B cell (primary cell): ENCODE measurements at regions of chr17 and their contacts with region 1.

Region 1: GRCh38 chr17:31216053-31216751 is 80.8 kb downstream of the OMG start:
- DNase-seq: peak; percentile 63
- ATAC-seq: no peak
- H3K4me3 ChIP-seq: no peak overlapping the region
- H3K4me3 Mint-ChIP-seq: no peak overlapping the region
- H3K27ac ChIP-seq: no peak overlapping the region
- H3K27ac Mint-ChIP-seq: no peak overlapping the region
- H3K4me1 ChIP-seq: no peaks in the 10 kb centered on the region
- H3K4me1 Mint-ChIP-seq: no peaks in the 10 kb centered on the region
- H3K27me3 ChIP-seq: no peaks in the 10 kb centered on the region
- H3K27me3 Mint-ChIP-seq: no peaks in the 10 kb centered on the region
- CTCF ChIP-seq: peak; percentile 82

Region 2: GRCh38 chr17:30808785-30809286 is 407.4 kb before region 1 on chr17:
- CTCF ChIA-PET with region 1: interaction called, 3 read pairs
- POLR2A ChIA-PET with region 1: no interaction called
- intact Hi-C with region 1: loop called (anchors 5 kb)
- DNase-seq: peak; percentile 86
- ATAC-seq: peak; percentile 96
- H3K4me3 ChIP-seq: peak overlapping the region in 4 of 5 experiments; percentile 11 to 41 (median 30)
- H3K4me3 Mint-ChIP-seq: peak overlapping the region; percentile 87
- H3K27ac ChIP-seq: peak overlapping the region; percentile 73 to 84
- H3K27ac Mint-ChIP-seq: peak overlapping the region; percentile 97
- H3K4me1 ChIP-seq: peaks cover 59 to 73% of the 10 kb centered on the region in 2 donors
- H3K4me1 Mint-ChIP-seq: peaks cover 65% of the 10 kb centered on the region
- H3K27me3 ChIP-seq: no peaks in the 10 kb centered on the region
- H3K27me3 Mint-ChIP-seq: no peaks in the 10 kb centered on the region
- CTCF ChIP-seq: no peak

Region 3: GRCh38 chr17:30915833-30916611 is 300.2 kb before region 1 on chr17:
- CTCF ChIA-PET with region 1: interaction called, 13 read pairs
- POLR2A ChIA-PET with region 1: no interaction called
- intact Hi-C with region 1: no loop called
- DNase-seq: no peak
- ATAC-seq: no peak
- H3K4me3 ChIP-seq: no peak overlapping the region
- H3K4me3 Mint-ChIP-seq: no peak overlapping the region
- H3K27ac ChIP-seq: no peak overlapping the region
- H3K27ac Mint-ChIP-seq: no peak overlapping the region
- H3K4me1 ChIP-seq: peaks cover 1 to 3% of the 10 kb centered on the region in 2 donors
- H3K4me1 Mint-ChIP-seq: peaks cover 5% of the 10 kb centered on the region
- H3K27me3 ChIP-seq: no peaks in the 10 kb centered on the region
- H3K27me3 Mint-ChIP-seq: no peaks in the 10 kb centered on the region
- CTCF ChIP-seq: no peak

Region 4: GRCh38 chr17:31015639-31016038 is 200.6 kb before region 1 on chr17:
- CTCF ChIA-PET with region 1: interaction called, 51 read pairs
- POLR2A ChIA-PET with region 1: no interaction called
- intact Hi-C with region 1: loop called (anchors 2 kb)
- DNase-seq: no peak
- ATAC-seq: no peak
- H3K4me3 ChIP-seq: no peak overlapping the region
- H3K4me3 Mint-ChIP-seq: no peak overlapping the region
- H3K27ac ChIP-seq: no peak overlapping the region
- H3K27ac Mint-ChIP-seq: no peak overlapping the region
- H3K4me1 ChIP-seq: no peaks in the 10 kb centered on the region
- H3K4me1 Mint-ChIP-seq: peaks cover 2% of the 10 kb centered on the region
- H3K27me3 ChIP-seq: no peaks in the 10 kb centered on the region
- H3K27me3 Mint-ChIP-seq: no peaks in the 10 kb centered on the region
- CTCF ChIP-seq: no peak

Region 5: GRCh38 chr17:31226373-31226772 is 10.2 kb after region 1 on chr17:
- CTCF ChIA-PET with region 1: interaction called, 21 read pairs
- POLR2A ChIA-PET with region 1: no interaction called
- intact Hi-C with region 1: no loop called
- DNase-seq: no peak
- ATAC-seq: no peak
- H3K4me3 ChIP-seq: no peak overlapping the region
- H3K4me3 Mint-ChIP-seq: peak overlapping the region; percentile 64
- H3K27ac ChIP-seq: no peak overlapping the region
- H3K27ac Mint-ChIP-seq: peak overlapping the region; percentile 57
- H3K4me1 ChIP-seq: peaks cover 7 to 15% of the 10 kb centered on the region in 2 donors
- H3K4me1 Mint-ChIP-seq: peaks cover 16% of the 10 kb centered on the region
- H3K27me3 ChIP-seq: no peaks in the 10 kb centered on the region
- H3K27me3 Mint-ChIP-seq: no peaks in the 10 kb centered on the region
- CTCF ChIP-seq: no peak

Region 6: GRCh38 chr17:31549525-31550388 is 333.6 kb after region 1 on chr17:
- CTCF ChIA-PET with region 1: no interaction called
- POLR2A ChIA-PET with region 1: no interaction called
- intact Hi-C with region 1: no loop called
- DNase-seq: peak; percentile 94
- ATAC-seq: peak; percentile 83
- H3K4me3 ChIP-seq: peak overlapping the region; percentile 79 to 91 (median 82)
- H3K4me3 Mint-ChIP-seq: peak overlapping the region; percentile 93
- H3K27ac ChIP-seq: peak overlapping the region; percentile 44 to 70
- H3K27ac Mint-ChIP-seq: peak overlapping the region; percentile 94
- H3K4me1 ChIP-seq: peaks cover 11 to 15% of the 10 kb centered on the region in 2 donors
- H3K4me1 Mint-ChIP-seq: peaks cover 28% of the 10 kb centered on the region
- H3K27me3 ChIP-seq: no peaks in the 10 kb centered on the region
- H3K27me3 Mint-ChIP-seq: no peaks in the 10 kb centered on the region
- CTCF ChIP-seq: no peak